Activated CD4-positive, alpha-beta T cell treated with anti-CD3 and anti-CD28 coated beads for 36 hours (primary cell): ENCODE measurements at regions of chr5 and their contacts with region 1.

Region 1: GRCh38 chr5:76256116-76256889 is 146.8 kb upstream of the IQGAP2 start:
- DNase-seq: peak; percentile 76
- ATAC-seq: peak; percentile 96
- H3K4me3 Mint-ChIP-seq: no peak overlapping the region
- H3K27ac Mint-ChIP-seq: no peak overlapping the region
- H3K4me1 Mint-ChIP-seq: peaks cover 7% of the 10 kb centered on the region
- H3K27me3 Mint-ChIP-seq: peaks cover 9% of the 10 kb centered on the region

Region 2: GRCh38 chr5:75734913-75735789 is 521.2 kb before region 1 on chr5:
- CTCF ChIA-PET with region 1: no interaction called
- POLR2A ChIA-PET with region 1: no interaction called
- intact Hi-C with region 1: loop called (anchors 1 to 10 kb)
- DNase-seq: peak; percentile 45
- ATAC-seq: no peak
- H3K4me3 Mint-ChIP-seq: no peak overlapping the region
- H3K27ac Mint-ChIP-seq: no peak overlapping the region
- H3K4me1 Mint-ChIP-seq: no peaks in the 10 kb centered on the region
- H3K27me3 Mint-ChIP-seq: peaks cover 5% of the 10 kb centered on the region

Region 3: GRCh38 chr5:76074487-76075065 is 181.7 kb before region 1 on chr5:
- CTCF ChIA-PET with region 1: interaction called, 4 read pairs
- POLR2A ChIA-PET with region 1: no interaction called
- intact Hi-C with region 1: loop called (anchors 1 kb)
- DNase-seq: peak; percentile 50
- ATAC-seq: peak; percentile 72
- H3K4me3 Mint-ChIP-seq: no peak overlapping the region
- H3K27ac Mint-ChIP-seq: no peak overlapping the region
- H3K4me1 Mint-ChIP-seq: no peaks in the 10 kb centered on the region
- H3K27me3 Mint-ChIP-seq: peaks cover 50% of the 10 kb centered on the region

Region 4: GRCh38 chr5:76269932-76270610 is 13.8 kb after region 1 on chr5:
- CTCF ChIA-PET with region 1: interaction called, 13 read pairs
- POLR2A ChIA-PET with region 1: no interaction called
- intact Hi-C with region 1: no loop called
- DNase-seq: peak; percentile 67
- ATAC-seq: peak; percentile 78
- H3K4me3 Mint-ChIP-seq: peak overlapping the region; percentile 52
- H3K27ac Mint-ChIP-seq: peak overlapping the region; percentile 96
- H3K4me1 Mint-ChIP-seq: peaks cover 40% of the 10 kb centered on the region
- H3K27me3 Mint-ChIP-seq: peaks cover 7% of the 10 kb centered on the region

Region 5: GRCh38 chr5:76766746-76767145 is 510.4 kb after region 1 on chr5:
- CTCF ChIA-PET with region 1: no interaction called
- POLR2A ChIA-PET with region 1: no interaction called
- intact Hi-C with region 1: no loop called
- DNase-seq: no peak
- ATAC-seq: peak; percentile 36
- H3K4me3 Mint-ChIP-seq: no peak overlapping the region
- H3K27ac Mint-ChIP-seq: no peak overlapping the region
- H3K4me1 Mint-ChIP-seq: peaks cover 4% of the 10 kb centered on the region
- H3K27me3 Mint-ChIP-seq: no peaks in the 10 kb centered on the region